Astrocyte of the cerebellum (primary cell): ENCODE measurements at regions of chr15 and their contacts with region 1.

Region 1: DNA sequence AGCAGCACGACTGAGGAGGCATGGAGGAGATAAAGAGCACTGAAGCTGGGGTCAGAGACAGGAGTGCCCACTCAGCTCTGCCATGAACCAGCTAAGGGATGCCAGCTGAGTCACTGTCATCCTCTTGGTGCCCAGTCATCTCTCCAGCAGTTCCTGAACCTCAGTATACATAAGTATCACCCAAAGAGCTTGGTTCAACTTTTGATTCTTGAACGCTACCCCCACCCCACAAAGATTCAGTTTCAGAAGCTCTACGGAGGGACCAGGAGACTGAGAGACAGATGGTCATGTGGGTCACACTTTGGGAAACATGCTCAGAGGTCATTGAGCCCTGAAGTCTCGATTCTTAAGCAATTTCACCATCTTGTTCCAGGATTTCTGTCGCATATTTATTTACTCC is 108.4 kb downstream of the ALDH1A2 start:
- DNase-seq: no peak
- H3K4me3 ChIP-seq: no peak overlapping the region
- CTCF ChIP-seq: no peak

Region 2: DNA sequence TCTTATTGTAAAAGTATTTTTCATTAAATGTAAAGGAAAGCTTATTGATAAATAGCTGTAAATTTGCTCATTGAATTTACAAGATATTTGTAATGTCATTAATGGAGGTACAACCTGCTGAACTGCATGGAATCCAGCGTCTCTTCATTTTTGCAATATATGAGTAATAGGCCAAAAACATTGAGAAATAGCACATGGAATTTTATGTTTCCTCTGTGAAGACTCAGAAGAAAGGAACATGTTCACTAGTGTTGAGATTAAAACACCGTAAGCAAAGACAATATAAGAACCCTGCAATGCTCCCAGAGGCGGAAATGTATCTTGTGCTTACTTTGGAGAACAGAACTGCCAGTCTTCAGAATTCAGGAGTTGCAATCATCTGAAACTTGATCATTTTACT is 59.2 kb before region 1 on chr15:
- in situ Hi-C with region 1: no loop called
- DNase-seq: no peak
- H3K4me3 ChIP-seq: no peak overlapping the region
- CTCF ChIP-seq: no peak

Region 3: DNA sequence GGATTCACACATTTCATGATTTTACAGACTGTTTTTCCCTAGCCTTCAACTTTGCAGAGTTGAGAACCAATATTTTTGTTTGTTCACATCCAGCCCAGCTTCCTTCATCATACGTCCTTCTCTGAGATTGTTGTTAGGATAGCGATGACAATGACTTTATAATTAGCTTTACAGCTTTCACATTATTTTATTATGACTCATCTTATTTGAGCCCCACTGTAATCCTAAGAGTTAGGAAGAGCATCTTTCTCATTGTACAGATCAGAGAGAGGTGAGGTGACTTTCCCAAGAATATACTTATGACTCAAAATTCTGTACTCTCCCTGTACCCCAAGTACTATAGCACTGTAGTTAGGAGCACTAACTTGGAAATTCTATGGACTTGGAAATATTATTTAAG is 47.7 kb before region 1 on chr15:
- in situ Hi-C with region 1: loop called (anchors 5 kb)
- DNase-seq: no peak
- H3K4me3 ChIP-seq: no peak overlapping the region
- CTCF ChIP-seq: no peak

Region 4: GRCh38 chr15:57994221-57995049 is 37.3 kb after region 1 on chr15:
- in situ Hi-C with region 1: no loop called
- DNase-seq: no peak
- H3K4me3 ChIP-seq: no peak overlapping the region
- CTCF ChIP-seq: no peak

Region 5: DNA sequence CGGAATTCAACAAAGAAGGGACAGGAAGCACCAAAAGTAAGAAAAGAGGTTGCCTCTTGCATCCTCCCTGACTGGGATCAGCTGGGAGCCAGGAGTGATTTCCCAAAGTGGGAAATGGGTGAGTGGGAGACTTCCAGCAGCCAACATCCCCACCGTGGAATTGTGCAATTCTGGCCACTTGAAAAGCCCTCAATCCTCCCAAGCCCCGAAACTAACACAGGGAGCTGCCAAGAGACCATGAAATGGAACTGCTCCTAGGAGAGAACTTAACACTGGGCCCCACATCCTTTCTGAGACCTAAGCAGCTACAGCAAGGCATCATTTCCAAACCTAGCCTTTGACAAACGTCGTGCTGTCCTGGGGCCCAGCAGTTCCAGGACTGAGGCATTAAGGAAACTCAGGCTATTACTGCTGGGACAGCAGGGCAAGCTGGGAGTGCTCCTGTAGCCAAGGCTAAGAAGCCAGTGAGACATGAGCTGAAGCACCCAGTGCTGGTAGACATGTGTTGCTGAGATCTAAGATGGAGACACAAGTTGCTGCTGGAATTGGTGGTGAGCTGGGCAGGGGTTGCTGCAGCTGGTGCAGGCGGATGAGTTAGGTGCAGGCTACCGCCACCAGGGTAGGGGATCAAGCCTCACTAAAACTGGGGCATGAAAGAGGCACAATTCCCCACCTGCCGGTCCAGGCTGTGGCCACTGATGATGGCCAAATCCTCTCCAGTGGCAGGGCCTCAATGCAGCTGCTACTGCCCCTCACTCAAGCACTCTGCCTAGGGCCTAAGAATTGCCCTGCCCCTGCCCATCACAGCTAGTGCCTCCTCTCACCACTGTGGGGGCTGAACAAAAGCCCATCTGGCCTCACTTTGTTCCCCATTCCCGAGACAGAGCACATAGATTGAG is 64.5 kb after region 1 on chr15:
- in situ Hi-C with region 1: no loop called
- DNase-seq: no peak
- H3K4me3 ChIP-seq: no peak overlapping the region
- CTCF ChIP-seq: no peak

Region 6: GRCh38 chr15:58889363-58889762 is 932.2 kb after region 1 on chr15:
- in situ Hi-C with region 1: no loop called
- DNase-seq: no peak
- H3K4me3 ChIP-seq: no peak overlapping the region
- CTCF ChIP-seq: no peak